Activated T-helper 1 cell treated with anti-CD3 and anti-CD28 coated beads, Interleukin-12 subunit alpha, Interleukin-12 subunit beta, Interleukin-2, Interleukin-4 antibody, amounts not matched to agents 30 ng/mL and 10 ng/mL and 1 ng/mL, durations not matched to agents 14 hours and 24 hours and 36 hours (primary cell): ENCODE measurements at regions of chr1 and their contacts with region 1.

Region 1: DNA sequence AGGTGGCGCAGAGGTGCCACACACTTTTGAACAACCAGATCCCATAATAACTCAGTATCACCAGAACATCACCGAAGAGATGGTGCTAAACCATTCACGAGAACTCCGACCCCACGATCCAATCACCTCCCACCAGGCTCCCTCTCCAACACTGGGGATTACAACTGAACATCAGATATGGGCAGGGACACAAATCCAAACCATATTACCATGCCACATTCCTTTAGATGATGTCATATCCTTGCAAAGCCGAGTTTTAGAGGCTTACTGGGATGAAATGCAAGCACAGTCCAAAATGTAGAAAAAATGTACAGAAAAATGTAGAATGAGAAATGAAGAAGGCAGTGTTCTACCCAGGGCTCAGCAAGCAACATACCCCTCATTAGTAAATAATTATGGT is 64.7 kb downstream of the SGIP1 start:
- DNase-seq: no peak
- H3K4me3 Mint-ChIP-seq: no peak overlapping the region
- H3K27ac Mint-ChIP-seq: no peak overlapping the region
- H3K4me1 Mint-ChIP-seq: no peaks in the 10 kb centered on the region
- H3K27me3 Mint-ChIP-seq: peaks cover 8% of the 10 kb centered on the region

Region 2: GRCh38 chr1:66642992-66643391 is 44.3 kb after region 1 on chr1:
- intact Hi-C with region 1: loop called (anchors 5 kb)
- DNase-seq: no peak
- H3K4me3 Mint-ChIP-seq: no peak overlapping the region
- H3K27ac Mint-ChIP-seq: no peak overlapping the region
- H3K4me1 Mint-ChIP-seq: no peaks in the 10 kb centered on the region
- H3K27me3 Mint-ChIP-seq: peaks cover 10% of the 10 kb centered on the region